CD4-positive, alpha-beta T cell (primary cell): ENCODE measurements at regions of chr5 and their contacts with region 1.

Region 1: GRCh38 chr5:36241631-36242533 is at the start of gene NADK2:
- DNase-seq: peak; percentile 85 to 98 (median 89)
- ATAC-seq: peak; percentile 87
- H3K4me3 ChIP-seq: peak within 1 kb of the TSS; percentile 85
- H3K4me3 Mint-ChIP-seq: peak within 1 kb of the TSS; percentile 94
- H3K27ac ChIP-seq: peak within 1 kb of the TSS; percentile 85 to 91
- H3K27ac Mint-ChIP-seq: peak within 1 kb of the TSS; percentile 96
- H3K4me1 ChIP-seq: peaks cover 22% of the 10 kb centered on the region
- H3K4me1 Mint-ChIP-seq: peaks cover 56% of the 10 kb centered on the region
- H3K27me3 ChIP-seq: no peaks in the 10 kb centered on the region
- H3K27me3 Mint-ChIP-seq: no peaks in the 10 kb centered on the region
- CTCF ChIP-seq: peak; percentile 71
- total RNA-seq, gene NADK2: 12.5 to 13.3 TPM

Region 2: GRCh38 chr5:34838785-34839714 is 1402.8 kb before region 1 on chr5 and contains the start of gene TTC23L:
- CTCF ChIA-PET with region 1: no interaction called
- POLR2A ChIA-PET with region 1: no interaction called
- intact Hi-C with region 1: loop called in 1 of 2 experiments (anchors 5 kb)
- DNase-seq: peak; percentile 84 to 98 (median 87)
- ATAC-seq: peak; percentile 89
- H3K4me3 ChIP-seq: peak within 1 kb of the TSS; percentile 78
- H3K4me3 Mint-ChIP-seq: peak within 1 kb of the TSS; percentile 95
- H3K27ac ChIP-seq: peak within 1 kb of the TSS; percentile 63 to 76
- H3K27ac Mint-ChIP-seq: peak within 1 kb of the TSS; percentile 88
- H3K4me1 ChIP-seq: peaks cover 16% of the 10 kb centered on the region
- H3K4me1 Mint-ChIP-seq: peaks cover 17% of the 10 kb centered on the region
- H3K27me3 ChIP-seq: no peaks in the 10 kb centered on the region
- H3K27me3 Mint-ChIP-seq: peaks cover 8% of the 10 kb centered on the region
- CTCF ChIP-seq: no peak
- total RNA-seq, gene TTC23L: 0.20 TPM in 1 of 2 experiments, not detected in the other

Region 3: DNA sequence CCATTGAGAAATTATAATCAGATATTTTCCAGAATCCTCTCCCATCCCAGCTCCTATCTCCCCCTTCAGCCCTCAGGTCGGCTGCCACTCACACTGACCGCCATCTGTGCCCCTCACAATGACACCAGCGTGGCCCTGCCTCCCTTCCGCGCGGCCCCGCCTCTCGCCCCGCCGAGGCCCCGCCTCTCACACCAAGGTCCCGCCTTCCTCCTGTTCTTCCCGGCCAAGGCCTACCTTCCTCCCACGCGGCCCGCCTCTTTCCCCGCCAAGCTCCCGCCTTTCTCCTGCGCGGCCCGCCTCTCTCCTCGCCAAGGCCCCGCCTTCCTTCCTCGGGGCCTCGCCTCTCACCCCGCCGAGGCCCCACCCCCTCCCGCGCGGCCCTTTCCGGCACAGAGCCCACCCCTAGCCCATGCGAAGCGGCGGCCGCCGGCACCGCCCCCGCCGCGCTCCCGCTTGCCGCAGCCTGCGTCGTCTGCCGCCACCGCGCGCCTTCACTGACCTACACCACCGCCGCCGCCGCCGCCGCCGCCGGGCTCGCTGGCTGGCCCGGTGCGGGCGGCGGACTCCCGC is 1312.6 kb before region 1 on chr5 and contains the start of gene DNAJC21:
- CTCF ChIA-PET with region 1: interaction called, 3 read pairs
- POLR2A ChIA-PET with region 1: interaction called, 15 read pairs
- intact Hi-C with region 1: loop called (anchors 5 to 10 kb)
- DNase-seq: peak; percentile 94 to 99 (median 97)
- ATAC-seq: peak; percentile 89
- H3K4me3 ChIP-seq: peak within 1 kb of the TSS; percentile 88
- H3K4me3 Mint-ChIP-seq: peak within 1 kb of the TSS; percentile 99
- H3K27ac ChIP-seq: peak within 1 kb of the TSS; percentile 39 to 72
- H3K27ac Mint-ChIP-seq: peak within 1 kb of the TSS; percentile 95
- H3K4me1 ChIP-seq: peaks cover 21% of the 10 kb centered on the region
- H3K4me1 Mint-ChIP-seq: peaks cover 37% of the 10 kb centered on the region
- H3K27me3 ChIP-seq: no peaks in the 10 kb centered on the region
- H3K27me3 Mint-ChIP-seq: no peaks in the 10 kb centered on the region
- CTCF ChIP-seq: no peak
- total RNA-seq, gene DNAJC21: 47.9 to 50.4 TPM

Region 4: DNA sequence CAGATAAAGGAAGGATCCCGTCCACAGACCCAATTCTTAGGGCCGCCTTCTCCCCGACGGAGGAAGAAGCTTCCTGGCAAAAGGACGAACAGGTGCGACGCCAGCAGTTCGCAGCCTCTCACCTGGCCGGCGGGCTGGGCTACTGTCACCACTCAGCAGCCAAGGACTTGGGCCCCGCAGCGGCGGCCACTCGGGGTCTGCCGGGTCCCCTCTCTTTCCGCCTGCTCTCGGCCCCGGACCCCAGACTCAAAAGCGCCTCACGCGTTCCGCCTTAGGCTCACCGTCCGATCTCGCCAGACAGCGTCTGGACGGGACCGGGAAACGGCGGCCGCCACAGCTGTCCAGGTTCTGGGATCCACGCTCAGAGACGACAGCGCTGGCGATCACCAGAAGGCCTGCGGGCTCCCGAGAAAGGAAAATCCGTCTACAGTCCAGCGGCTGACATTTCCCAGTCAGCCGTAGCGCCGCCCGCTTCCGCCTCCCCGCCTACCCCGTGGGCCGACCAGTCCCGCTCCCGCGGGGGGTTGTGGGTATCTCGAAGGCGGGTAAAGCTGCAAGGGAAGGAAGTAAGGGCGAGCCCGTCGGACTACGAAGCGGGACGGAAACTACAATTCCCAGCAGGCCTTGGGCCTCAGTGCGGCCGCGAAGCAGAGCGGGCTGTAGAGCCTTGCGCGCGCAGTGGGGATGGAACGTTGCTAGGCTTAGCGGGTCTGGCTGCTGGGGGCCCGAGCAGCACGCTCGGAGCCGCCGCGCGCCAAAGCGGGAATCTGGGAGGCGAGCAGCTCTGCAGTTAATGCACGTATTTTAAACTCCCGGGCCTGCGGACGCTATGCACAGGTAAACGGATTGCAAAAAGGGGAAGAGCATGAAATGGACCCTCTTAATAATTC is 90.2 kb before region 1 on chr5 and contains the starts of genes LMBRD2 and SKP2:
- CTCF ChIA-PET with region 1: interaction called, 23 read pairs
- POLR2A ChIA-PET with region 1: interaction called, 49 read pairs
- intact Hi-C with region 1: loop called (anchors 2 kb)
- DNase-seq: peak; percentile 90 to 99 (median 95)
- ATAC-seq: peak; percentile 96
- H3K4me3 ChIP-seq: peak within 1 kb of the TSS; percentile 92
- H3K4me3 Mint-ChIP-seq: peak within 1 kb of the TSS; percentile 95
- H3K27ac ChIP-seq: peak within 1 kb of the TSS; percentile 77 to 82
- H3K27ac Mint-ChIP-seq: peak within 1 kb of the TSS; percentile 86
- H3K4me1 ChIP-seq: peaks cover 30% of the 10 kb centered on the region
- H3K4me1 Mint-ChIP-seq: peaks cover 76% of the 10 kb centered on the region
- H3K27me3 ChIP-seq: no peaks in the 10 kb centered on the region
- H3K27me3 Mint-ChIP-seq: no peaks in the 10 kb centered on the region
- CTCF ChIP-seq: no peak
- total RNA-seq, gene LMBRD2: 4.1 to 4.2 TPM
- total RNA-seq, gene SKP2: 6.3 to 7.2 TPM

Region 5: GRCh38 chr5:36230151-36230793 is 11.6 kb before region 1 on chr5:
- CTCF ChIA-PET with region 1: interaction called, 12 read pairs
- POLR2A ChIA-PET with region 1: interaction called, 13 read pairs
- intact Hi-C with region 1: no loop called
- DNase-seq: no peak
- ATAC-seq: no peak
- H3K4me3 ChIP-seq: no peak overlapping the region
- H3K4me3 Mint-ChIP-seq: no peak overlapping the region
- H3K27ac ChIP-seq: no peak overlapping the region
- H3K27ac Mint-ChIP-seq: no peak overlapping the region
- H3K4me1 ChIP-seq: no peaks in the 10 kb centered on the region
- H3K4me1 Mint-ChIP-seq: peaks cover 18% of the 10 kb centered on the region
- H3K27me3 ChIP-seq: no peaks in the 10 kb centered on the region
- H3K27me3 Mint-ChIP-seq: no peaks in the 10 kb centered on the region
- CTCF ChIP-seq: no peak

Region 6: DNA sequence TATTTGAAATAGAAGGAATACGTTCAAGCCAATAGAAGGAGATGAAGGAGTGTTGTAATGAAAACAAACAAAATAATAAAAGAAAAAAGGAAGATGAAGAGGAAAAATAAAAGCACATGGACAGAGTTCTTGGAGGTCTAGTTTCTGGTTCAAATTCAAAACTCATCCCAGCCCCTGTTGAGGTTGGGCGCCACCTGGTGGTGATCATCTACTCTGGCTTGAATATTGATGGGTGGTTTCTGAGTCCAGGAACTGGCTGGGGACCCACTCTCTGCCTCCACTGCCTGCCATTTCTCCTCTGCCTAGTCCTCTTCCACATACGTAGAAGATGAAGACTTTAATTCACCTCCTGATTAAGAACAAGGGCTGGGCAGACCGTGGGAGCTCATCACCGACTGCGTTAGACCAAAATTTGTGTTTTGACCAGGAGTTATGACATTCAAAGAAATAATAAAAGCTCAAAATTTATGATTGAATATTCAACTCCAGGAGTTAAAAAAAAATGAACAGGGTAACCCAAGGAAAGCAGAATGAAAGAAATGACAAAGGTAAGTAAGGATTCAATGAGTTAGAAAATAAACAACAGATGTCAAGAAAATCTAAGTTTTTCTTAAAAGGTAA is 265.6 kb after region 1 on chr5:
- CTCF ChIA-PET with region 1: no interaction called
- POLR2A ChIA-PET with region 1: no interaction called
- intact Hi-C with region 1: loop called in 1 of 2 experiments (anchors 1 kb)
- DNase-seq: peak; percentile 48 to 77 (median 60)
- ATAC-seq: peak; percentile 55
- H3K4me3 ChIP-seq: no peak overlapping the region
- H3K4me3 Mint-ChIP-seq: no peak overlapping the region
- H3K27ac ChIP-seq: no peak overlapping the region
- H3K27ac Mint-ChIP-seq: no peak overlapping the region
- H3K4me1 ChIP-seq: no peaks in the 10 kb centered on the region
- H3K4me1 Mint-ChIP-seq: no peaks in the 10 kb centered on the region
- H3K27me3 ChIP-seq: no peaks in the 10 kb centered on the region
- H3K27me3 Mint-ChIP-seq: peaks cover 6% of the 10 kb centered on the region
- CTCF ChIP-seq: peak; percentile 86

Region 7: GRCh38 chr5:37370864-37371726 is 1129.2 kb after region 1 on chr5 and contains the start of gene NUP155:
- CTCF ChIA-PET with region 1: interaction called, 4 read pairs
- POLR2A ChIA-PET with region 1: interaction called, 9 read pairs
- intact Hi-C with region 1: loop called in 1 of 2 experiments (anchors 5 kb)
- DNase-seq: peak; percentile 75 to 96 (median 85)
- ATAC-seq: peak; percentile 93
- H3K4me3 ChIP-seq: peak within 1 kb of the TSS; percentile 95
- H3K4me3 Mint-ChIP-seq: peak within 1 kb of the TSS; percentile 97
- H3K27ac ChIP-seq: peak within 1 kb of the TSS; percentile 86
- H3K27ac Mint-ChIP-seq: peak within 1 kb of the TSS; percentile 96
- H3K4me1 ChIP-seq: peaks cover 27% of the 10 kb centered on the region
- H3K4me1 Mint-ChIP-seq: peaks cover 36% of the 10 kb centered on the region
- H3K27me3 ChIP-seq: no peaks in the 10 kb centered on the region
- H3K27me3 Mint-ChIP-seq: no peaks in the 10 kb centered on the region
- CTCF ChIP-seq: no peak
- total RNA-seq, gene NUP155: 21.6 to 26.0 TPM